OCI-LY7 (cell line): ENCODE measurements at regions of chr6 and their contacts with region 1.

Region 1: GRCh38 chr6:26553635-26554446 is 15.7 kb downstream of the HMGN4 start:
- DNase-seq: peak; percentile 84
- H3K4me3 ChIP-seq: peak overlapping the region; percentile 80
- H3K27ac ChIP-seq: peak overlapping the region; percentile 91
- H3K4me1 ChIP-seq: peaks cover 62% of the 10 kb centered on the region
- CTCF ChIP-seq: no peak

Region 2: DNA sequence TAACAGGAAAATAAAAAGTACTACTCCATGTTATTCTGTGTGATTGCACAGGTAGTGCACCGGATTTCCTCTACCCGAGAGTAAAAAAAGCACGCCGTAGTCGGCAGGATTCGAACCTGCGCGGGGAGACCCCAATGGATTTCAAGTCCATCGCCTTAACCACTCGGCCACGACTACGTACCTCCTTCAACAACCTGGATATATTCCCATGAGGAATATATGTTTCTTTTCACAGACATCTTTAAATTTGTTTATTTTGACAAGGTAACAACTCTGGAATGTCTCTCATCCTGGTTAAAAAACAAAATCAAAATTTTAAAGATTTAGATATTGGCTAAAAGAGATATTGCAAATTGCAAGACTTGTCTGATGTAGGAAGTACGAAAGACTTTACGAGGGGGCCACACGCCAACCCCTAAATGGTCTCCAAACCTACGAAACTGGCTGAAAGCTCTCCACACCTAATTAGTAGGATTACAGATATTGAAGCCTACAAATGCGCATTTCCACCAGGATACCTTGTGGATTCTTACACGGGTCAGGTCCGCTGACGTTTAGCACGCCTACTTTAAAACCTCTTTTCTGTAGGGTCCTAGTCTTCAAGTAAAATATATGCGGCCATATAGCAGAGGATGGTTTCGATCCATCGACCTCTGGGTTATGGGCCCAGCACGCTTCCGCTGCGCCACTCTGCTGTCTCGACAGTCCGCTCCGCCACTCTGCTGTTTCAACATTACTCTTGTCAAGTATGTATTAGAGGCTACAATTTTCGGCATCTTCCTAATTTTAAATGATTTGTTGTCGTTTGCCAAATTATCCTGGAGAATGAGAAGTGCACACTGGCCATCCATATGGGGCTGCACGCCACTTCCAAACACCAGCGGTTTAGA is 241.1 kb before region 1 on chr6:
- CTCF ChIA-PET with region 1: interaction called, 3 read pairs
- POLR2A ChIA-PET with region 1: no interaction called
- intact Hi-C with region 1: loop called (anchors 1 kb)
- DNase-seq: peak; percentile 80
- H3K4me3 ChIP-seq: peak overlapping the region; percentile 71
- H3K27ac ChIP-seq: peak overlapping the region; percentile 43
- H3K4me1 ChIP-seq: peaks cover 28% of the 10 kb centered on the region
- CTCF ChIP-seq: no peak

Region 3: DNA sequence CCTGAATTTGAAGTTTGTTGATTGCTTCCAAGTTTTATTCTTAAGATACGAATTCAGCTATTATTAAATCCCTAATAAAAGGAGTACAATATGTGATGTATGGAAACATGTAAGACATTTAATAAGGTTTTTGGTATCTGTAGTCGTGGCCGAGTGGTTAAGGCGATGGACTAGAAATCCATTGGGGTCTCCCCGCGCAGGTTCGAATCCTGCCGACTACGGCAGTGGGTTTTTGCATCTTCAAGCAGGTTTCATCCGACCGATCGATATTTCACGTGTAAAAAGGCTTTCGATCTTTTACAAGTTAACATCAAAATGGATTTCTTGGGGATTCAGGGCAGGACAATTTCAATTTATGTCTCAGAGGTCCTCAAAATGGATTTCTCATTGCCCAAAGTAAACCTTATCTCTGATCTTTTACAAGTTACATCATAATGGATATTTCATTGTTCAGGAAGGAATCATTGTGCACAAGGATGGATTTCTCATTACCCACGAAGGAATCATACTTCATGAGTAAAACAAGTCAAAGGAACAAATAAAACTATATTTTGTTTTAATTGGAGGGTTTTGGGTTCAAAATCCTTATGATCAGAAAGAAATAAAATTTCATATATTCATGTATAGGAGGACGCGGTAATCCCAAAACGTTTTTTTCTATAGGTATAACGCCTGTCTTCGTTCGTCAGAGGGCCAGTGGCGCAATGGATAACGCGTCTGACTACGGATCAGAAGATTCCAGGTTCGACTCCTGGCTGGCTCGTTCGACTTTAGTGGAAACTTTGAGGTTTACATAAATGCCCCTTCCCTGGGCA is 226.2 kb before region 1 on chr6:
- CTCF ChIA-PET with region 1: no interaction called
- POLR2A ChIA-PET with region 1: interaction called, 5 read pairs
- intact Hi-C with region 1: loop called (anchors 2 kb)
- DNase-seq: peak; percentile 68
- H3K4me3 ChIP-seq: peak overlapping the region; percentile 66
- H3K27ac ChIP-seq: no peak overlapping the region
- H3K4me1 ChIP-seq: peaks cover 44% of the 10 kb centered on the region
- CTCF ChIP-seq: no peak

Region 4: GRCh38 chr6:26532699-26533531 is 20.9 kb before region 1 on chr6:
- CTCF ChIA-PET with region 1: no interaction called
- POLR2A ChIA-PET with region 1: interaction called, 24 read pairs
- intact Hi-C with region 1: loop called (anchors 1 kb)
- DNase-seq: peak; percentile 90
- H3K4me3 ChIP-seq: peak overlapping the region; percentile 69
- H3K27ac ChIP-seq: peak overlapping the region; percentile 93
- H3K4me1 ChIP-seq: peaks cover 47% of the 10 kb centered on the region
- CTCF ChIP-seq: no peak

Region 5: GRCh38 chr6:26568601-26569432 is 15.0 kb after region 1 on chr6:
- CTCF ChIA-PET with region 1: no interaction called
- POLR2A ChIA-PET with region 1: interaction called, 6 read pairs
- intact Hi-C with region 1: loop called (anchors 1 kb)
- DNase-seq: peak; percentile 92
- H3K4me3 ChIP-seq: peak overlapping the region; percentile 82
- H3K27ac ChIP-seq: peak overlapping the region; percentile 29
- H3K4me1 ChIP-seq: peaks cover 24% of the 10 kb centered on the region
- CTCF ChIP-seq: peak; percentile 23; the same call in 1 of the 2 replicates

Region 6: GRCh38 chr6:26607434-26608230 is 53.8 kb after region 1 on chr6:
- CTCF ChIA-PET with region 1: no interaction called
- POLR2A ChIA-PET with region 1: no interaction called
- intact Hi-C with region 1: no loop called
- DNase-seq: peak; percentile 80
- H3K4me3 ChIP-seq: peak overlapping the region; percentile 21
- H3K27ac ChIP-seq: no peak overlapping the region
- H3K4me1 ChIP-seq: no peaks in the 10 kb centered on the region
- CTCF ChIP-seq: peak; percentile 96